Activated B cell treated with CpG ODN at 0.5 μM for 24 hours (primary cell): ENCODE measurements at regions of chr11 and their contacts with region 1.

Region 1: DNA sequence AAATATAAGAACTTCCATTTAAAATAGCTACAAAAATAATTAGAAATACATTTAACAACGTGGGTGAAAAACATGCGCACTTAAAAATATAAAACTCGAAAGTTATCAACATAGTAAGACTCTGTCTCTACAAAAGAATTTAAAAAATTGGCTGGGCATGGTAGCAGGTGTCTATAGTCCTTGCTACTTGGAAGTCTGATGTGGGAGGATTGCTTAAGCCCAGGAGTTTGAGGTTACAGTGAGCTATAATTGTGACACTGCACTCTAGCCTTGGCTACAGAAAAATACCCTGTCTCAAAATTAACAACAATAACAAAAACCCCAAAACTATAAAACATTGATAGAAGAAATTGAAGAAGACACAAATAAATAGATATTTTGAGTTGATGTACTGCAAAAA is 13.8 kb upstream of the CASP12 start:
- DNase-seq: no peak
- ATAC-seq: no peak
- H3K4me3 Mint-ChIP-seq: no peak overlapping the region
- H3K27ac Mint-ChIP-seq: no peak overlapping the region
- H3K4me1 Mint-ChIP-seq: peaks cover 42% of the 10 kb centered on the region
- H3K27me3 Mint-ChIP-seq: no peaks in the 10 kb centered on the region
- CTCF ChIP-seq: no peak

Region 2: GRCh38 chr11:104928811-104929210 is 16.7 kb after region 1 on chr11:
- CTCF ChIA-PET with region 1: no interaction called
- POLR2A ChIA-PET with region 1: no interaction called
- intact Hi-C with region 1: loop called (anchors 2 kb)
- DNase-seq: no peak
- ATAC-seq: no peak
- H3K4me3 Mint-ChIP-seq: no peak overlapping the region
- H3K27ac Mint-ChIP-seq: no peak overlapping the region
- H3K4me1 Mint-ChIP-seq: peaks cover 49% of the 10 kb centered on the region
- H3K27me3 Mint-ChIP-seq: no peaks in the 10 kb centered on the region
- CTCF ChIP-seq: no peak